ENCODE measurements at regions of chr3 and their contacts with region 1.

Region 1: GRCh38 chr3:134754768-134755559 is 40.1 kb upstream of the EPHB1 start:
- DNase-seq: peak; percentile 24
- H3K4me3 ChIP-seq: no peak overlapping the region
- H3K27ac ChIP-seq: no peak overlapping the region
- H3K4me1 ChIP-seq: no peaks in the 10 kb centered on the region
- H3K27me3 ChIP-seq: no peaks in the 10 kb centered on the region
- CTCF ChIP-seq: peak; percentile 54 to 83
- POLR2A ChIP-seq: no peak

Region 2: GRCh38 chr3:134333522-134334181 is 421.3 kb before region 1 on chr3:
- CTCF ChIA-PET with region 1: no interaction called
- POLR2A ChIA-PET with region 1: no interaction called
- dilution Hi-C with region 1: no loop called
- intact Hi-C with region 1: no loop called
- DNase-seq: no peak
- H3K4me3 ChIP-seq: no peak overlapping the region
- H3K27ac ChIP-seq: no peak overlapping the region
- H3K4me1 ChIP-seq: peaks cover under 1% of the 10 kb centered on the region
- H3K27me3 ChIP-seq: no peaks in the 10 kb centered on the region
- CTCF ChIP-seq: no peak
- POLR2A ChIP-seq: no peak

Region 3: GRCh38 chr3:134485718-134486576 is 269.0 kb before region 1 on chr3 and contains the starts of genes ANAPC13 and CEP63:
- CTCF ChIA-PET with region 1: no interaction called
- POLR2A ChIA-PET with region 1: no interaction called
- dilution Hi-C with region 1: no loop called
- intact Hi-C with region 1: no loop called
- DNase-seq: peak; percentile 99
- H3K4me3 ChIP-seq: peak within 1 kb of the TSS; percentile 75 to 88 (median 75)
- H3K27ac ChIP-seq: peak within 1 kb of the TSS; percentile 92
- H3K4me1 ChIP-seq: peaks cover 45% of the 10 kb centered on the region
- H3K27me3 ChIP-seq: no peaks in the 10 kb centered on the region
- CTCF ChIP-seq: no peak
- POLR2A ChIP-seq: peak; percentile 82
- total RNA-seq, gene ANAPC13: 50.8 and 58.6 TPM in 2 replicates
- total RNA-seq, gene CEP63: 24.9 and 29.4 TPM in 2 replicates

Region 4: GRCh38 chr3:134630506-134630905 is 124.5 kb before region 1 on chr3:
- CTCF ChIA-PET with region 1: interaction called, 14 read pairs
- POLR2A ChIA-PET with region 1: no interaction called
- dilution Hi-C with region 1: no loop called
- intact Hi-C with region 1: no loop called
- DNase-seq: no peak
- H3K4me3 ChIP-seq: no peak overlapping the region
- H3K27ac ChIP-seq: no peak overlapping the region
- H3K4me1 ChIP-seq: no peaks in the 10 kb centered on the region
- H3K27me3 ChIP-seq: peaks cover 0 to 9% of the 10 kb centered on the region in 2 experiments
- CTCF ChIP-seq: peak; percentile 26 to 28
- POLR2A ChIP-seq: no peak

Region 5: DNA sequence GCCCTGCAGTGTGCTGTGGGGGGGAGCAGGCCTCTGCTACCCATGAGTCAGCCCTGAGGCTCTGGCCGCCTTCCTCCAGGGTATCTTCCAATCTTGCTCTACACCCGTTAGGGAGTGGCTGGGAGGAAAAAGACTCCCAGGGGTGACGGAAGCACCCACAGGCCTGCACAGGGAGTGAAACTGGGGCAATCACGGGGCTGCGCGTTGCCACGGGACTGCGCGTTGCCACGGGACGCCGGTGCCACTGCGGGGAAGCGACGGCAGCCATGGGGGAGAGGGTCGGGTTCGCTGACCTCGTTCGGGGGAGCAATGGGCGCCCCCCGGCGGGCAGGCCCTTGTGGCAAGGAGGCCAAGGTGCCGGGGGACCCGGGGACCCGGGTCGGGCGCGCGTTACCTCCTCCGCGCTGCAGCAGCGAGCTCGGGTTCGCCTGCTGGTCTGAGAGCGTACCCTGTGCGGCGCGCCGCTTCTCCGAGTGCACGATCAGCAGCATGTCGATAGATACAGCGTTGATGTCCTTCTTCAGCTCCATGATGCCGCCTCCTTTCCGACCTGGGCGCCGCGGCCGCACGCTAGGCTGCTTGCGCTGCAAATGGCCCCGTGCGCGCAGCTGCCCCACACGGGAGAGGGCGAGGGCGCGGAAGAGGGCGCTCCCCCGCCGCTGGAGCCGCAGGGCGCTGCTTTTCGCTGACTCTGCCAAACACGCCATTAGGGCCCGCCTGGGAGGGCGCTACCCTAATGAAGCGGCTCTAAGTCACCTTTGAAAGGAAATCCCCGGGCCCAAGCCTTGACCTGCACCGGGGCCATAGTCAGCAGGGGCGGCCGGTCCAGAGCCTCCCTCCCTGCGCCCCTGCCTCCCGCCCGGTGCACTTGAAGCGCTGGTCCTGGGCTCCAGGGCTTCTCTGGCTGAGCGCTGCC is 104.3 kb before region 1 on chr3 and contains the start of gene KY:
- CTCF ChIA-PET with region 1: no interaction called
- POLR2A ChIA-PET with region 1: no interaction called
- dilution Hi-C with region 1: no loop called
- intact Hi-C with region 1: no loop called
- DNase-seq: no peak
- H3K4me3 ChIP-seq: no peak within 1 kb of the TSS
- H3K27ac ChIP-seq: no peak within 1 kb of the TSS
- H3K4me1 ChIP-seq: no peaks in the 10 kb centered on the region
- H3K27me3 ChIP-seq: peaks cover 9 to 12% of the 10 kb centered on the region in 2 experiments
- CTCF ChIP-seq: no peak
- POLR2A ChIP-seq: no peak
- total RNA-seq, gene KY: not detected in 2 replicates